Adrenal gland (tissue), 19 donors: ENCODE measurements at regions of chr9 and their contacts with region 1.

Region 1: GRCh38 chr9:26326473-26327044 is 566.0 kb downstream of the CAAP1 start:
- DNase-seq: peak; percentile 18 to 69 (median 49)
- H3K4me3 ChIP-seq: no peak overlapping the region
- H3K27ac ChIP-seq: no peak overlapping the region
- H3K4me1 ChIP-seq: no peaks in the 10 kb centered on the region
- H3K27me3 ChIP-seq: no peaks in the 10 kb centered on the region
- CTCF ChIP-seq: peak; percentile 71 to 85 (median 80)
- POLR2A ChIP-seq: no peak

Region 2: DNA sequence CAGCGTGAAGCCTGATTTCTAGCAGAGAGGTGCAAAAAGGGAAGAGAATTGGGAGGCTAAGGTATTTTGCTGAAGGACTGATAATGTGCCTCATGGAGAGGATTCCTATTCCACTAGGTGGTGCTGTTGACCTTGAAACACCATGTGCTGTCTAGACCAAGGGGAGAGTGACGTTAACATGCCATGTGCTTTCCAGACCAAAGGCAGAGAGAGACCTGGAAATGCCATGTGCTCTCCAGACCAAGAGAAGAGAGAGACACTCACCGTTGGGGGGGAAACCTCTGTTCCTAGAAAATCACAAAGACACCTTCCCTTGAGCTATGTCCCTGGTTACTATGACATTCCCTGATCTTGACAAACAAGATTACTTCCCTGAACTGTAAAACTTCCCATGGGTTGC is 362.3 kb before region 1 on chr9:
- intact Hi-C with region 1: loop called (anchors 5 to 10 kb)
- DNase-seq: peak; percentile 37 to 72 (median 61)
- H3K4me3 ChIP-seq: no peak overlapping the region
- H3K27ac ChIP-seq: no peak overlapping the region
- H3K4me1 ChIP-seq: no peaks in the 10 kb centered on the region
- H3K27me3 ChIP-seq: no peaks in the 10 kb centered on the region
- CTCF ChIP-seq: peak; percentile 34 to 76 (median 64)
- POLR2A ChIP-seq: no peak

Region 3: GRCh38 chr9:26181836-26182235 is 144.7 kb before region 1 on chr9:
- intact Hi-C with region 1: no loop called
- DNase-seq: no peak
- H3K4me3 ChIP-seq: no peak overlapping the region
- H3K27ac ChIP-seq: no peak overlapping the region
- H3K4me1 ChIP-seq: no peaks in the 10 kb centered on the region
- H3K27me3 ChIP-seq: no peaks in the 10 kb centered on the region
- CTCF ChIP-seq: no peak
- POLR2A ChIP-seq: no peak

Region 4: GRCh38 chr9:27529316-27530278 is 1203.0 kb after region 1 on chr9 and contains the start of gene MOB3B:
- intact Hi-C with region 1: no loop called
- DNase-seq: peak; percentile 74 to 90 (median 86)
- H3K4me3 ChIP-seq: peak within 1 kb of the TSS; percentile 45 to 90 (median 64)
- H3K27ac ChIP-seq: peak within 1 kb of the TSS in 4 of 5 donors; percentile 11 to 86 (median 74)
- H3K4me1 ChIP-seq: peaks cover 0 to 11% of the 10 kb centered on the region in 2 donors
- H3K27me3 ChIP-seq: no peaks in the 10 kb centered on the region
- CTCF ChIP-seq: peak; percentile 57 to 98 (median 85)
- POLR2A ChIP-seq: no peak
- total RNA-seq, gene MOB3B: 1.4 to 7.0 (median 3.7) TPM